WTC11 (cell line): ENCODE measurements at regions of chr6 and their contacts with region 1.

Region 1: DNA sequence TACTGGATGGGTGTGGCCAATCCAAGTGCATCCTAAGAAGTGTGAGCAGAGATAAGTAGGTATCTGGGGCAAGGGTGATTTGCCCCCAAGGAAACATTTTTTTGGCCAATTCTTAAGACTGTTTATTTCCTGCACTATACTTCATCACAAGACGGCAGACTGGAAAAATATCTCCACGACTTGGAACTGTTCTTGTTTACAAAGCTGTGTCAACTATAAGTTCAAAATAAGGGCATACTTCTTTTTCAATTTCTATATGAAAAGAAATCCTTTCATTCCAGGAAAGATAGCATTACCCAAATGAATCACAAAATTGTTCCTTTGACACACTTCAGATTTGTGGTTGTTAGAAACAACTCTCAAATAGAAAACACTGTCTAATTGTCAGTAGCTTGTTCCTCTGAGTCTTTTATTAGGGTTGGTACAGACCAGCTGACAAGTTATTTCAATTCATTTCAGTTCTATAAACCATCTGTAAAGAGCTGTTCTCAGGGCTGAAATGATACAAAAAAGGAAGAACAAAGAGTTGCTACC is 212.9 kb upstream of the PRDM1 start:
- DNase-seq: no peak
- ATAC-seq: no peak
- H3K4me3 Mint-ChIP-seq: no peak overlapping the region
- H3K27ac Mint-ChIP-seq: no peak overlapping the region
- H3K4me1 Mint-ChIP-seq: peaks cover 26% of the 10 kb centered on the region
- H3K27me3 Mint-ChIP-seq: no peaks in the 10 kb centered on the region; the same call in 1 of the 2 replicates
- CTCF ChIP-seq: no peak

Region 2: DNA sequence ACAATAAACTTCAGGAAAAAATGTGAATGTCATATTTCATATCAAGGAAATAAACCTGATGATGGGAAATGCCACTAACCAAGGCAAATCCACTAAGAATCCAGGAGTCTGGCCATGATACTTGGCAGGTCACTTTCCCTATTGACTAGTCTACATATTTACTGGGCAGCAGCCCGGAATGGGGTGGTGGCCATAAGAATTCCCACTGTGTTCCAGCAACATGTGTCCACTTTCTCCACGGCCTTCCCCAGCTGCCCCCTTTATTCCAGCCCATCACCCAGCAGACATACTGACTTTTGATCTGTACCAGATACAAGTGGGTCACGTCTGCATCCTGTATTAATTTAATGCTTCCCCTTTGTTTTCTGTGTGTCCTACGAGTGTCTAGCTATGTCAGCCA is 21.6 kb before region 1 on chr6:
- CTCF ChIA-PET with region 1: no interaction called
- POLR2A ChIA-PET with region 1: interaction called, 10 read pairs
- DNase-seq: no peak
- ATAC-seq: no peak
- H3K4me3 Mint-ChIP-seq: no peak overlapping the region
- H3K27ac Mint-ChIP-seq: no peak overlapping the region
- H3K4me1 Mint-ChIP-seq: peaks cover 15% of the 10 kb centered on the region
- H3K27me3 Mint-ChIP-seq: peaks cover 8% of the 10 kb centered on the region
- CTCF ChIP-seq: no peak